ENCODE measurements at regions of chr15 and their contacts with region 1.

Region 1: GRCh38 chr15:67150028-67150860 is 84.8 kb downstream of the SMAD3 start:
- DNase-seq: peak; percentile 97
- H3K4me3 ChIP-seq: peak overlapping the region in 2 of 3 experiments; percentile 0 to 23
- H3K27ac ChIP-seq: peak overlapping the region; percentile 92
- H3K4me1 ChIP-seq: peaks cover 51% of the 10 kb centered on the region
- H3K27me3 ChIP-seq: no peaks in the 10 kb centered on the region
- CTCF ChIP-seq: no peak

Region 2: GRCh38 chr15:67080900-67081431 is 69.3 kb before region 1 on chr15:
- CTCF ChIA-PET with region 1: no interaction called
- dilution Hi-C with region 1: no loop called
- in situ Hi-C with region 1: no loop called
- intact Hi-C with region 1: loop called (anchors 2 kb)
- DNase-seq: peak; percentile 80
- H3K4me3 ChIP-seq: no peak overlapping the region
- H3K27ac ChIP-seq: peak overlapping the region; percentile 84
- H3K4me1 ChIP-seq: peaks cover 45% of the 10 kb centered on the region
- H3K27me3 ChIP-seq: no peaks in the 10 kb centered on the region
- CTCF ChIP-seq: peak in 1 of 2 donors; percentile 41

Region 3: GRCh38 chr15:67125589-67126502 is 24.4 kb before region 1 on chr15:
- CTCF ChIA-PET with region 1: no interaction called
- dilution Hi-C with region 1: no loop called
- in situ Hi-C with region 1: no loop called
- intact Hi-C with region 1: loop called (anchors 1 kb)
- DNase-seq: peak; percentile 93
- H3K4me3 ChIP-seq: peak overlapping the region in 1 of 3 experiments; percentile 4
- H3K27ac ChIP-seq: peak overlapping the region; percentile 92
- H3K4me1 ChIP-seq: peaks cover 73% of the 10 kb centered on the region
- H3K27me3 ChIP-seq: no peaks in the 10 kb centered on the region
- CTCF ChIP-seq: no peak

Region 4: DNA sequence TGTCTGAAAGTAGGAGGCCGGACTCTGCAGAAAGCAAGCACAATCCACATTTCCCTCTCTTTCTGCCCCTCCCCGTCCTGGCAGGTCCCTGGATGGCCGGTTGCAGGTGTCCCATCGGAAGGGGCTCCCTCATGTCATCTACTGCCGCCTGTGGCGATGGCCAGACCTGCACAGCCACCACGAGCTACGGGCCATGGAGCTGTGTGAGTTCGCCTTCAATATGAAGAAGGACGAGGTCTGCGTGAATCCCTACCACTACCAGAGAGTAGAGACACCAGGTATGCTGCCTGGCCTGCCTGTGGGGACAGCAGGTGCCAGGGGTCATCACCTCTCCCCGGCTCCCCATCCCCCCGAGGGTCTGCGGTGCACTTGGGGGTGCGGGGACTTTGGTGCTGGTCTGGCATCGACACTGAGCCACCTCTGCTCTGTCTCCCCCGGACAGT is 14.6 kb after region 1 on chr15:
- CTCF ChIA-PET with region 1: no interaction called
- dilution Hi-C with region 1: no loop called
- in situ Hi-C with region 1: no loop called
- intact Hi-C with region 1: loop called (anchors 1 kb)
- DNase-seq: no peak
- H3K4me3 ChIP-seq: no peak overlapping the region
- H3K27ac ChIP-seq: no peak overlapping the region
- H3K4me1 ChIP-seq: peaks cover 11% of the 10 kb centered on the region
- H3K27me3 ChIP-seq: no peaks in the 10 kb centered on the region
- CTCF ChIP-seq: no peak

Region 5: GRCh38 chr15:67212684-67213367 is 62.6 kb after region 1 on chr15:
- CTCF ChIA-PET with region 1: no interaction called
- dilution Hi-C with region 1: no loop called
- in situ Hi-C with region 1: no loop called
- intact Hi-C with region 1: no loop called
- DNase-seq: no peak
- H3K4me3 ChIP-seq: no peak overlapping the region
- H3K27ac ChIP-seq: no peak overlapping the region
- H3K4me1 ChIP-seq: no peaks in the 10 kb centered on the region
- H3K27me3 ChIP-seq: no peaks in the 10 kb centered on the region
- CTCF ChIP-seq: no peak